Transverse colon (tissue), 4 donors: ENCODE measurements at regions of chrX and their contacts with region 1.

Region 1: DNA sequence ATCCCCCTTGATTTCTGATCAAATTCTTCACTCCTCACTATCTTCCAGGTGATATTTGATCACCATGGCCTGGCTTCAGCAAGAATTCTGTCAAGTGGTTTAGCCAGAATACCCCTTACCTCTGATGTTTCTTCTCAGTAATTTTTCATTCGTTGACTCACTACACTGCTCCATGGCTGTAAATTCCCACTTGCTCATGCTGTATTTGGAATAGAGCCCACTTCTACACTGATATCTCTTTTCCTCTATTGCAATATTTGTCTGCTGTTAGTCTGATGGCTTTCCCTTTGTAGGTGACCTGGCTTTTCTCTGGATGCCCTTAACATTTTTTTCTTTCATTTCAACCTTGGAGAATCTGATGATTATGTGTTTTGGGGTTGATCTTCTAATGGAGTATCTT is 73.9 kb upstream of the DIPK2B start:
- DNase-seq: no peak
- H3K4me3 ChIP-seq: no peak overlapping the region
- H3K27ac ChIP-seq: no peak overlapping the region
- H3K4me1 ChIP-seq: no peaks in the 10 kb centered on the region
- H3K27me3 ChIP-seq: no peaks in the 10 kb centered on the region
- CTCF ChIP-seq: no peak
- EP300 ChIP-seq: no peak
- POLR2A ChIP-seq: no peak

Region 2: GRCh38 chrX:45083314-45083713 is 191.3 kb before region 1 on chrX:
- in situ Hi-C with region 1: no loop called
- intact Hi-C with region 1: no loop called
- DNase-seq: no peak
- H3K4me3 ChIP-seq: no peak overlapping the region
- H3K27ac ChIP-seq: no peak overlapping the region
- H3K4me1 ChIP-seq: no peaks in the 10 kb centered on the region
- H3K27me3 ChIP-seq: no peaks in the 10 kb centered on the region
- CTCF ChIP-seq: no peak
- EP300 ChIP-seq: no peak
- POLR2A ChIP-seq: no peak

Region 3: GRCh38 chrX:45172890-45173289 is 101.7 kb before region 1 on chrX:
- in situ Hi-C with region 1: loop called in 1 of 4 experiments (anchors 25 kb)
- intact Hi-C with region 1: no loop called
- DNase-seq: no peak
- H3K4me3 ChIP-seq: no peak overlapping the region
- H3K27ac ChIP-seq: no peak overlapping the region
- H3K4me1 ChIP-seq: no peaks in the 10 kb centered on the region
- H3K27me3 ChIP-seq: no peaks in the 10 kb centered on the region
- CTCF ChIP-seq: no peak
- EP300 ChIP-seq: no peak
- POLR2A ChIP-seq: no peak

Region 4: GRCh38 chrX:45309096-45309495 is 34.5 kb after region 1 on chrX:
- in situ Hi-C with region 1: no loop called
- intact Hi-C with region 1: no loop called
- DNase-seq: no peak
- H3K4me3 ChIP-seq: no peak overlapping the region
- H3K27ac ChIP-seq: no peak overlapping the region
- H3K4me1 ChIP-seq: no peaks in the 10 kb centered on the region
- H3K27me3 ChIP-seq: no peaks in the 10 kb centered on the region
- CTCF ChIP-seq: no peak
- EP300 ChIP-seq: no peak
- POLR2A ChIP-seq: no peak